ENCODE measurements at regions of chr9 and their contacts with region 1.

Region 1: DNA sequence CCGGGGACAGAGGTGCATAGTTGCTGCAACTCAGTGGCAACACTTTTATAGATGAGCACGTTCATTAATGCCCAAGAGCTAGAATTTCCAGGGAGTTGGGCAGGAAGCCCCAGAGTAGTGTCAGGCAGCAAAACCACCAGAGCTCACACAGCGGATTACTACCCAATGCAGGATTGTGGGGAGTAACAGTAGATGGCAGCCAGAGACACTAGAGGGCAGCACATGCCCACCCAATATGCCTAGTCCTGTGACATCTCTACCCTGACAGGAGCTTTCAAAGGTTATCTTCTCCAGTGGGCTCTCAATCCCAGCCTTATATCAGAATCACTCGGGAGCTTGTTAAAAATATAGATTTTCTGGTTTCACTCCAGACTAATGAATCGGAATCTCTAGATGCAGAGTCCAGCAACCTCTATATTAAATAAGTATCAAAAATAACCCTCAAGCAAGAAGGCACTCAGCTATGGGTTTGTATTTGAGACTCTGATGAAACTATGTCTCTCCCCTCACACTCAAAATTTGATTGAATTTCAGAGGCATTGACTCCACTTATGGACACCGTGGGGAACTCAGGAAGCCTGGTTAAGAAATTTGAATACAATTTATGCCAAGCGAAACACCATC is 58.4 kb upstream of the PHF24 start:
- DNase-seq: peak; percentile 83
- ATAC-seq: peak; percentile 100
- H3K4me3 Mint-ChIP-seq: no peak overlapping the region
- H3K27ac Mint-ChIP-seq: no peak overlapping the region
- H3K4me1 Mint-ChIP-seq: peaks cover 2% of the 10 kb centered on the region
- H3K27me3 Mint-ChIP-seq: peaks cover 25% of the 10 kb centered on the region
- CTCF ChIP-seq: peak; percentile 72

Region 2: DNA sequence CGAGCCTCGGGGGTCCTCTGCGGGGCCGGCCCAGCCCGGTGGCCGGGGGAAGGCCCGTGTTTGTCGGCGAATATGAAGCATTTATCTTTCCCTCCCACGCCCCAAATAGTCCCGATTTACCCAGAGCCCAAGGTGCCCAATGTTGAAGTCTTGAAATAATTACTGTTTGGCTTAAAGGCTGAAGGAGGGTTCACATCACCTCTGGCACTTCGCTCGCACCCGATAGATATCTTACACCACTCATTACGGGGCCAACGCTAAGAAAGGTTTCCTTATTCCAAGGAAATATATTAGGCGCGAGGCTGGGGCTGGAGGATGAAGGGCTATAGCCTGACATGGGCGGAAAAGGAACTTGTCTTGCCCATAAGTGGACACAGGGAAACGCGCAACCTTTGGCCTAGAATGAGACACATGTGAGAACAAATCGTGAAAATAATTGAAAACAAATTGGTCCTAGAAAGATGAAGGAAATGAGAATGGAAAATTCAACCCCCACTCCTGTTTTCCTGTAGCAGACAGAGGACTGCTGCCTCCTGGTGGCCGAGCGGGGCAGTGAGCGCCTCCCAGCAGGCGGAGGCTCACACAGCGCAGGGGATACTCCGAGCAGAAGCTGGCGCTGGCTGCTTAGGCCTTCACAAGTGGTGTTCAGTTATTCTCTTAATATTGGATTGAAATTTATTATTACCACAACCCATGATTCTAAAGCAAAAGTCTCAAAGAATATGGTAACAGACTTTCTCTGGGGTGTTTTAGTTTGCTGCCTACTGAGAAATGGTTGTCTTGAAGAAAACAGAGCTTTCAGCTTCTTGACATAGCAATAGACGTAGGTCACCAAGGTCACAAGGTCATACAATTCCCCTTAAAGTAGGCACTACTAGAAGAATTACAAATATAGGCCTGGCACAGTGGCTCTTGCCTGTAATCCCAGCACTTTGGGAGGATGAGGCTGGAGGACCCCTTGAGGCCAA is 197.6 kb before region 1 on chr9:
- CTCF ChIA-PET with region 1: interaction called, 17 read pairs
- POLR2A ChIA-PET with region 1: no interaction called
- DNase-seq: peak; percentile 88
- ATAC-seq: peak; percentile 61
- H3K4me3 Mint-ChIP-seq: peak overlapping the region; percentile 63
- H3K27ac Mint-ChIP-seq: no peak overlapping the region
- H3K4me1 Mint-ChIP-seq: peaks cover 7% of the 10 kb centered on the region
- H3K27me3 Mint-ChIP-seq: peaks cover 43% of the 10 kb centered on the region
- CTCF ChIP-seq: peak; percentile 83

Region 3: GRCh38 chr9:34961574-34962490 is 62.2 kb after region 1 on chr9:
- CTCF ChIA-PET with region 1: interaction called, 16 read pairs
- POLR2A ChIA-PET with region 1: no interaction called
- DNase-seq: no peak
- ATAC-seq: no peak
- H3K4me3 Mint-ChIP-seq: no peak overlapping the region
- H3K27ac Mint-ChIP-seq: no peak overlapping the region
- H3K4me1 Mint-ChIP-seq: peaks cover 19% of the 10 kb centered on the region
- H3K27me3 Mint-ChIP-seq: peaks cover 42% of the 10 kb centered on the region
- CTCF ChIP-seq: no peak

Region 4: GRCh38 chr9:35026671-35027070 is 127.0 kb after region 1 on chr9:
- CTCF ChIA-PET with region 1: interaction called, 17 read pairs
- POLR2A ChIA-PET with region 1: no interaction called
- DNase-seq: no peak
- ATAC-seq: no peak; the same call in 1 of the 2 replicates
- H3K4me3 Mint-ChIP-seq: no peak overlapping the region
- H3K27ac Mint-ChIP-seq: peak overlapping the region; percentile 72
- H3K4me1 Mint-ChIP-seq: peaks cover 37% of the 10 kb centered on the region
- H3K27me3 Mint-ChIP-seq: peaks cover 13% of the 10 kb centered on the region
- CTCF ChIP-seq: no peak

Region 5: DNA sequence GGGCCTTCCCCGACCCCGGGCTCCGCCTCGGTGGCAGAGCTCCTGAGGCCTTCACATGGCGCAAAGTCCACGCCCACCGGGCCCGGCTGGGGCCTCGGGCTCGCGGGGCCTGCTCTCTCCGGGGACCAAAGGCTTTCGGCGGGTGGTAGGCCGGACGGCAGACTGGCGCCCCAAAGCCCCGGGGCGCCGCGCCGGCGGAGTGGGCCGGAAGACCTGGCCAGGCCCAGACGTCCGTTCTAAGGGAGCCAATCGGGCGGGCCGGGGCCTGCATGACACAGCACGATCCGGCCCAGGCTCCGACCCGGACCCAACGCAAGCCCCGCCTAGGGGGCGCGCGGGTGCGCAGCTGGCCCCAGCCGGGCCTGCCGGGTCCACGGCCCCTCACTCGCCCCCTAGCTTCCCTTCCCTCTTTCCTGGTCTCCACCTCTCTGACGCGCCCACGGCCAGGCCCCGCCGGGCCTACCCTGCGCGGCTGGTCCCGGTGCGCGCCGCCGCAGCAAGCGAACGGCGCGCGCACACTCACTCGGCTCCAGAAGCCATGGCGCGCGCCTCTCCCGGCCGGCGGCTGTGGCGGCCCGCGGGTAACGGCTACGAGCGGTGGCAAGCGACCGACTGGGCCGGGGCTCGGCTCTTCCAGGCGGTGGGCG is 172.3 kb after region 1 on chr9:
- CTCF ChIA-PET with region 1: interaction called, 22 read pairs
- POLR2A ChIA-PET with region 1: interaction called, 5 read pairs
- DNase-seq: peak; percentile 85
- ATAC-seq: peak; percentile 68
- H3K4me3 Mint-ChIP-seq: peak overlapping the region; percentile 93
- H3K27ac Mint-ChIP-seq: peak overlapping the region; percentile 96
- H3K4me1 Mint-ChIP-seq: peaks cover 24% of the 10 kb centered on the region
- H3K27me3 Mint-ChIP-seq: no peaks in the 10 kb centered on the region
- CTCF ChIP-seq: no peak

Region 6: DNA sequence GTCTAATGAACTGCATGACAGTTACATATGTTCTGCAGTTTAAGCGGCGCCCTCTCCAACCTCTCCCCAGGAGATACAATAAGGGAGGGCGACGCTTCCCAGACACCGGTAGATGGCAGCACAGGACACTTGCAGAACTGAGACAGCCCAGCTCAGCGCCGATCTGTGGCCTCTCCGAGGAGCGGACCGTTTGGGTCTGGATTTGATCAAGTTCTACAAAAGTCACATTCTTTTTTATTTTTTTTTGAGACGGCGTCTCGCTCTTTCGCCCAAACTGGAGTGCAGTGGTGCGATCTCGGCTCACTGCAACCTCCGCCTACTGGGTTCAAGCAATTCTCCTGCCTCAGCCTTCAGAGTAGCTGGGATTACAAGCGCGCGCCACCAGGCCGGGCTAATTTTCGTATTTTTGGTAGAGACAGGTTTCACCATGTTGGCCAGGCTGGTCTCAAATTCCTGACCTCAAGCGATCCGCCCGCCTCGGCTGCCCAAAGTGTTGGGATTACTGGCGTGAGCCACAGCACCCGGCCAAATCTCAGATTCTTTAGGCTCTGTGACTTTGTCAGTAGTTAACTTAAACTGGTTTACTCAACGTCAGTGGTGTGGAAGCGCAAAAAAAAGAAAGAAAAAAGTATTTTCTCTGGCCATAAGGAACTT is 217.4 kb after region 1 on chr9:
- CTCF ChIA-PET with region 1: interaction called, 12 read pairs
- POLR2A ChIA-PET with region 1: no interaction called
- DNase-seq: peak; percentile 92
- ATAC-seq: peak; percentile 34
- H3K4me3 Mint-ChIP-seq: peak overlapping the region; percentile 98
- H3K27ac Mint-ChIP-seq: peak overlapping the region; percentile 96
- H3K4me1 Mint-ChIP-seq: peaks cover 28% of the 10 kb centered on the region
- H3K27me3 Mint-ChIP-seq: no peaks in the 10 kb centered on the region
- CTCF ChIP-seq: peak; percentile 69